ENCODE measurements at regions of chr7 and their contacts with region 1.

Region 1: GRCh38 chr7:101244375-101245146 is at the start of gene FIS1:
- DNase-seq: peak; percentile 81 to 96 (median 92)
- ATAC-seq: peak; percentile 95
- H3K4me3 ChIP-seq: peak within 1 kb of the TSS; percentile 94 to 98
- H3K4me3 Mint-ChIP-seq: peak within 1 kb of the TSS; percentile 99
- H3K27ac ChIP-seq: peak within 1 kb of the TSS; percentile 92 to 93
- H3K27ac Mint-ChIP-seq: peak within 1 kb of the TSS; percentile 99
- H3K4me1 ChIP-seq: peaks cover 18% of the 10 kb centered on the region
- H3K4me1 Mint-ChIP-seq: peaks cover 46% of the 10 kb centered on the region
- H3K27me3 ChIP-seq: no peaks in the 10 kb centered on the region
- H3K27me3 Mint-ChIP-seq: no peaks in the 10 kb centered on the region
- CTCF ChIP-seq: peak; percentile 96
- total RNA-seq, gene FIS1: 66.1 to 72.6 TPM

Region 2: DNA sequence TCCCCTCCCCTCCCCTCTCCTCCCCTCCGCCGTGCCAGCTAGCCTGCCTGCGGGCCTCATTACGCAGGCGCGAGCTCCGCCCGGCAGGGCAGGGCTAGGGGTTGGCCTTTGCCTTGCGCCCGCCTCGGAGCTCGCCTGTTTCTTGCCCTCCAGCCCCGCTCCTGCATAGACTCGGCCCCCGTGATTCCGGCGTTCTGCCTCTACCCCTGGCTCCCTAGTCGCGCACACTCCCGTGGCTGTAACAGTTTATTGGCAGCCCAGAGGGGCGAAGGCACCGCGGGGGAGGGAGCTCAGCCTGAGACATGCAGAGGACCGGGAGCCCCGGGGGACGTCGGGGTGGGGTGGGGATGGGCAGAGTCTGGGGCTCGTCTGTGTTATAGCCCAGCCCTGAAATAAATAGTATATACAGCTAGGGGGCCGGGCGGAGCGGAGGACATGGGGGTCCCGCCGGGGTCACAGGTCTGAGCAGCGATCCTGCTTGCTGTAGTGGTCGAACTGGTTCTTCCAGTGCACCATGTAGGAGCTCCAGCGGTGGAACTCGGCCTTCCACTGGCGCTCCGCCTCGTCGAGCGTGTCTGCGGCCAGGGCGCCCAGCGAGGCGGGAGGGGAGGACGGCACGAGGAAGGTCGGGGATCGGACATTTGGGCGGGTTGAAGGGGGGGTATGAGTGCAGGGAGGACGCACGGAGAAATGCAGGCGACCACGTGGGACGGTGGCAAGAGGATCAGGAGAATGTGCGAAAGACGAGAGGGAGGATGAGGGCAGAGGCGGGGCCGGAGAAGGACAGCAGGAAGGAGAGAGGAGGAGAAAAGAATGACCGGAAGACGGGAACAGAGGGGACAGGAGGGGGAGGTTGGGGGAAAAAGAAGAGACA is 354.6 kb before region 1 on chr7:
- CTCF ChIA-PET with region 1: no interaction called
- POLR2A ChIA-PET with region 1: no interaction called
- intact Hi-C with region 1: loop called in 1 of 2 experiments (anchors 2 kb)
- DNase-seq: peak; percentile 79 to 97 (median 91)
- ATAC-seq: peak; percentile 82
- H3K4me3 ChIP-seq: peak overlapping the region; percentile 65 to 90
- H3K4me3 Mint-ChIP-seq: peak overlapping the region; percentile 87
- H3K27ac ChIP-seq: peak overlapping the region; percentile 22 to 44
- H3K27ac Mint-ChIP-seq: peak overlapping the region; percentile 72
- H3K4me1 ChIP-seq: peaks cover 40% of the 10 kb centered on the region
- H3K4me1 Mint-ChIP-seq: peaks cover 42% of the 10 kb centered on the region
- H3K27me3 ChIP-seq: peaks cover 0 to 20% of the 10 kb centered on the region in 2 experiments
- H3K27me3 Mint-ChIP-seq: peaks cover 13% of the 10 kb centered on the region
- CTCF ChIP-seq: no peak

Region 3: GRCh38 chr7:101138213-101138870 is 106.2 kb before region 1 on chr7:
- CTCF ChIA-PET with region 1: interaction called, 19 read pairs
- POLR2A ChIA-PET with region 1: interaction called, 3 read pairs
- intact Hi-C with region 1: no loop called
- DNase-seq: peak; percentile 46 to 92 (median 84)
- ATAC-seq: peak; percentile 94
- H3K4me3 ChIP-seq: no peak overlapping the region
- H3K4me3 Mint-ChIP-seq: peak overlapping the region; percentile 22
- H3K27ac ChIP-seq: no peak overlapping the region
- H3K27ac Mint-ChIP-seq: no peak overlapping the region
- H3K4me1 ChIP-seq: peaks cover 5% of the 10 kb centered on the region
- H3K4me1 Mint-ChIP-seq: peaks cover 10% of the 10 kb centered on the region
- H3K27me3 ChIP-seq: no peaks in the 10 kb centered on the region
- H3K27me3 Mint-ChIP-seq: peaks cover 16% of the 10 kb centered on the region
- CTCF ChIP-seq: peak; percentile 65

Region 4: GRCh38 chr7:101186844-101187428 is 57.6 kb before region 1 on chr7:
- CTCF ChIA-PET with region 1: interaction called, 21 read pairs
- POLR2A ChIA-PET with region 1: no interaction called
- intact Hi-C with region 1: no loop called
- DNase-seq: no peak
- ATAC-seq: no peak
- H3K4me3 ChIP-seq: no peak overlapping the region
- H3K4me3 Mint-ChIP-seq: no peak overlapping the region
- H3K27ac ChIP-seq: no peak overlapping the region
- H3K27ac Mint-ChIP-seq: no peak overlapping the region
- H3K4me1 ChIP-seq: no peaks in the 10 kb centered on the region
- H3K4me1 Mint-ChIP-seq: peaks cover 4% of the 10 kb centered on the region
- H3K27me3 ChIP-seq: peaks cover 0 to 2% of the 10 kb centered on the region in 2 experiments
- H3K27me3 Mint-ChIP-seq: peaks cover 28% of the 10 kb centered on the region
- CTCF ChIP-seq: no peak

Region 5: GRCh38 chr7:101226721-101227120 is 17.8 kb before region 1 on chr7:
- CTCF ChIA-PET with region 1: interaction called, 16 read pairs
- POLR2A ChIA-PET with region 1: no interaction called
- intact Hi-C with region 1: no loop called
- DNase-seq: no peak
- ATAC-seq: no peak
- H3K4me3 ChIP-seq: no peak overlapping the region
- H3K4me3 Mint-ChIP-seq: no peak overlapping the region
- H3K27ac ChIP-seq: no peak overlapping the region
- H3K27ac Mint-ChIP-seq: no peak overlapping the region
- H3K4me1 ChIP-seq: no peaks in the 10 kb centered on the region
- H3K4me1 Mint-ChIP-seq: peaks cover 4% of the 10 kb centered on the region
- H3K27me3 ChIP-seq: no peaks in the 10 kb centered on the region
- H3K27me3 Mint-ChIP-seq: no peaks in the 10 kb centered on the region
- CTCF ChIP-seq: no peak

Region 6: DNA sequence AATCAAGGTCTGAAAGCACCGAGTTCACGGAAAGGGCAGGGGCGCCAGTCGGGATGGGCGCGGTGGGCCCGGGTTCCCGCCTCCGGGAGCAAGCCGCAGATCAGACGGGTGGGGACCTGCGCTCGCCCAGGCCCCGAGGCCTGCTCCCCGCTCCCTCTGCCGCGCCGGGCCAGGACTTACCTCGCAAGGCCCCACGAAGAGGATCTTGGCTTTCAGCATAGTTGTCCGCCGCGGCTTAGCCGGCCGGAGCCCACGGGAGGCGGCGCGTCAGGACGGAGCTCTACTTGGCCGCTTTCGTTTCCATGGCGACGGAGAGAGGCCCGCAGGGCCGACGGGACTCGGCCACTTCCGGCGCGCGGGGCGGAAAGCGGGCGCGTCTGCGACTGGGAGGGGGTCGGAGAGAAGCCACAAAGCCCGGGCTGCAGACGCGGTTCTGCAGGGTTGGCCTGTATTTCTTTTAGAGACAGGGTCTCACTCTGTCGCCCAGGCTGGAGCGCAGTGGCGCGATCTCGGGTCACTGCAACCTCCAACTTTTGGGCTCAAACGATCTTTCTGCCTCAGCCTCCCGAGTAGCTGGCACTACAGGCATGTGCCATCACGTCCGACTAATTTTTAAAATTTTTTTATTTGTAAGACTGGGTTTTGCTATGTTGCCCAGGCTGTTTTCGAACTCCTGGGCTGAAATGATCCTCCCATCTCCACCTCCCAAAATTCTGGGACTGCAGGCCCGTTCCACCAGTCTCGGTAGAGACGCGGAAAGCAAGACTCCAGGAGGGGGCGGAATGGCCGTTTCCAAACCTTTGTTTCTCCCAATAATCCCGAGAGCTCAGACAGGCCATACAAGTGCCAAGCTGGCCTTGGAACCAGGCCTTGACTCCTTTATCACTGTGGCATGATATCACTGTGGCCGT is 77.2 kb after region 1 on chr7 and contains the start of gene IFT22:
- CTCF ChIA-PET with region 1: no interaction called
- POLR2A ChIA-PET with region 1: no interaction called
- intact Hi-C with region 1: loop called in 1 of 2 experiments (anchors 2 kb)
- DNase-seq: peak; percentile 60 to 90 (median 85)
- ATAC-seq: peak; percentile 92
- H3K4me3 ChIP-seq: peak within 1 kb of the TSS; percentile 67 to 97
- H3K4me3 Mint-ChIP-seq: peak within 1 kb of the TSS; percentile 90
- H3K27ac ChIP-seq: peak within 1 kb of the TSS; percentile 49 to 68
- H3K27ac Mint-ChIP-seq: peak within 1 kb of the TSS; percentile 90
- H3K4me1 ChIP-seq: peaks cover 16% of the 10 kb centered on the region
- H3K4me1 Mint-ChIP-seq: peaks cover 14% of the 10 kb centered on the region
- H3K27me3 ChIP-seq: no peaks in the 10 kb centered on the region
- H3K27me3 Mint-ChIP-seq: no peaks in the 10 kb centered on the region
- CTCF ChIP-seq: no peak
- total RNA-seq, gene IFT22: 2.3 to 3.5 TPM

Measured in CD8-positive, alpha-beta T cell (primary cell).